ENCODE measurements at regions of chr17 and their contacts with region 1.

Region 1: DNA sequence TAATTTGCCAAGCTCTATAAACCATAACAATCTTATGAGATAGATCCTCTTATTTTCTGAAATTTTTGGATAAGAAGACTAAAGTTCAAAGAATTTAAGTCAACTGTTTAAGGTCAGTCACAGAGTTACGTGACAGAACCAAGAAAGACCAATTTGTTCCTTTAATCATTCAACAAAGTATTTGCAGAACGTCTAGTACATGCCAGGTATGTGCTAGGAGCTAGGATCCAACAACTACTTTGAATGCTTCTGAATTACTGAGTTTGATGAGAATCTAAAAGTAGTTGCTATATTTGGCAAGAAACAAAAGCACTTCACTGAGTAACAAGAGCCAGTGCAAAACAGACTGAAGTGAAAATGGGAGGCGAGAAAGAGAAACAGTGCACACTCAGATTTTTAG is 15.0 kb downstream of the GLOD4 start:
- DNase-seq: no peak

Region 2: DNA sequence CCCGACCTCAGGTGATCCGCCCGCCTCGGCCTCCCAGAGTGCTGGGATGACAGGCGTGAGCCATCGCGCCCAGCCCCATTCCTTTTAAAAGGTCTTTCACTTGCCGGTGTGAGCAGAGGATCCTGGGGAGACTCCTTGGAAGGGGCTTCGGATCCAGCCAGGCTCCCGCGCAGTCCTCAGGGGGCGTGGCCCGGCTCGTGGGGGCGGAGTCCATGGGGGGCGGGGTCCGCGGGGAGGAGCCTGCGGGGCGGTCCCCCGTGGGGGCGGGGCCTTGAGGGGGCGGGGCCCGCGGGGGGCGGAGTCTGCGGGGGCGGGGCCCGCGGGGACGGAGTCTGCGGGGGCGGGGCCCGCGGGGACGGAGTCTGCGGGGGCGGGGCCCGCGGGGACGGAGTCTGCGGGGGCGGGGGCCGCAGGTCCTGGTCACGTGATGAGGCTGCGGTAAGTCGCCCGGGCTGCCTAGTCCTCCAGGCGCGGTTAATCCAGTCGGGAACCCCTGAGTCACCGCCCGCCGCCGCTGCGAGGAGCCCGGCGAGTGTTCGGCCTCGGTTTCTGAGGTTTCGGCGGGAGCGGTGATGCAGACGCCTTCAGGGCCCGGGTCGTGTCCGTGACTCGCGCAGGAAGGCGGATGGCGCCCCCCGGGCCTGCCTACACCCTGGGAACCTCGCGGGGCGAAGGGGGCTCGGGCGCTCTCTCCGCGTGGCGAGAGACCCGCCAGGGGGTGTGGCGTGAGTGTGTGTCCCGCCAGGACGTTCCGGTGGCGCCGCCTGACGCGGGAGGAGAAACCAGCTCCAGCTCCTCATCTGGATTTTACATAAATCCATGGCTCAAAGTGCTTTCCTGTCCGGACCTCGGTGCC is 436.3 kb after region 1 on chr17:
- intact Hi-C with region 1: loop called in 1 of 2 experiments (anchors 5 kb)
- DNase-seq: peak; percentile 93

Measured in posterior vena cava (tissue), 2 donors.